PC-9 (cell line): ENCODE measurements at regions of chr5 and their contacts with region 1.

Region 1: GRCh38 chr5:32123058-32123805 is 50.9 kb downstream of the GOLPH3 start:
- DNase-seq: no peak
- H3K4me3 ChIP-seq: no peak overlapping the region
- H3K27ac ChIP-seq: no peak overlapping the region
- H3K4me1 ChIP-seq: no peaks in the 10 kb centered on the region
- H3K27me3 ChIP-seq: no peaks in the 10 kb centered on the region
- CTCF ChIP-seq: no peak

Region 2: GRCh38 chr5:31153521-31153920 is 969.7 kb before region 1 on chr5:
- CTCF ChIA-PET with region 1: no interaction called
- POLR2A ChIA-PET with region 1: no interaction called
- intact Hi-C with region 1: no loop called
- DNase-seq: no peak
- H3K4me3 ChIP-seq: no peak overlapping the region
- H3K27ac ChIP-seq: no peak overlapping the region
- H3K4me1 ChIP-seq: peaks cover 6% of the 10 kb centered on the region
- H3K27me3 ChIP-seq: no peaks in the 10 kb centered on the region
- CTCF ChIP-seq: no peak

Region 3: DNA sequence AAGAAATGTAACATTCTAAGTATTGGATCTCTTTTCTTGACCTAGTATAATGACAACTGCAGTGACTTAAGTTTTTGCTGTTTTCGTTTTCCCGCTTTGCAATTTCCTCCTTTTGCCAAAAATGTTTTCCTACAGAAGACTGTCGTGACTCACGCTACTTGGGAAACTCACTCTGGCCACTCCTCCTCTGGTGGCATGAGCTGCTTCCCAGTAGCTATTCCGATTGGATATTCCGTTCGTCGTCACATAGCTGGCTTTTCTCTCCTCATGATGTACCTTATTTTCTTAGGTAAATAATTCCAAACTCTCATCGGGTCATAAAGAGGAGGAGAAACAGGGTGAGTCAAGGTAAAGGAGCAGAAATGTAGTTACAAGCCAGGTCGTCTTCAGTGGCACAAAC is 14.0 kb before region 1 on chr5:
- CTCF ChIA-PET with region 1: no interaction called
- POLR2A ChIA-PET with region 1: no interaction called
- intact Hi-C with region 1: no loop called
- DNase-seq: no peak
- H3K4me3 ChIP-seq: no peak overlapping the region
- H3K27ac ChIP-seq: no peak overlapping the region
- H3K4me1 ChIP-seq: no peaks in the 10 kb centered on the region
- H3K27me3 ChIP-seq: no peaks in the 10 kb centered on the region
- CTCF ChIP-seq: no peak

Region 4: DNA sequence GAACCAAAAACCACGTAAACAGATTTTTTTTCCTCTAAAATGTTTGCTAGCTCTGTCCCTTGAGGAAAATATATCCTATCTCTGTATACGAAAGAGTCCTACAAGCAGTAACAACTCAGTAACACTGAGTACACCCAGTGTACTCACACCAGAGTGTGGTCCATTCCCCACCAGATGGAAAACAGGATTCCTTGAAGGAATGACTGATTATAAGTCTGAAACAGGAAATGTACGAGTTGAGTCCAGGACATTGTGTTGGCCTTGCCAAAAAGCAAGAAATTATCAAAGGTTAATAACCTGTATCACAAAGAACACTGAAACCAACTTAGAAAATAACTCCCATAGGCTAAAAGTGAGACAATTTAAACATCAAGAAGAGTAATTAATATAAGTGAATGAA is 30.5 kb after region 1 on chr5:
- CTCF ChIA-PET with region 1: no interaction called
- POLR2A ChIA-PET with region 1: interaction called, 15 read pairs
- intact Hi-C with region 1: no loop called
- DNase-seq: no peak
- H3K4me3 ChIP-seq: no peak overlapping the region
- H3K27ac ChIP-seq: peak overlapping the region; percentile 8; the same call in 1 of the 2 replicates
- H3K4me1 ChIP-seq: no peaks in the 10 kb centered on the region
- H3K27me3 ChIP-seq: no peaks in the 10 kb centered on the region
- CTCF ChIP-seq: no peak